Endothelial cell of umbilical vein (primary cell): ENCODE measurements at regions of chr13 and their contacts with region 1.

Region 1: DNA sequence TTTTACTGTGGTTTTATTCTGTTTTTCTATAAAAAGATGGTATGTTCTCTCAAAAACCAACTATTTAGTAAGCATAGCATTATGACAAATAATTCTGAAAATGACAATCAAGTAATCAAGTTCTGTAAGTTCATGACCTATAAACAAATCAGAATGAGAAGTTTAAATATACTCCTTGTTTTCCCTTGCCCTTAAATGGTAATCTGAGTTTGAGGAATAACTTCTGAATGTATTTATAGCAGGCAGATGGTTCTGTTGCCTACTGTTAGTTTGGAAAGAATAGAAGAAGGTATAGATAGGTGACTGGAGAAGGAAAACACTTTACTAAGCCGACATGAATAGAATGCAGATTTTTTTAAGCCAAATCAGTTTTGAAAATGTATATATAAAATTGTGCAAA is 63.9 kb downstream of the POSTN start:
- DNase-seq: no peak
- H3K4me3 ChIP-seq: no peak overlapping the region
- H3K27ac ChIP-seq: no peak overlapping the region
- H3K4me1 ChIP-seq: no peaks in the 10 kb centered on the region
- H3K27me3 ChIP-seq: no peaks in the 10 kb centered on the region
- CTCF ChIP-seq: no peak
- POLR2A ChIP-seq: no peak

Region 2: GRCh38 chr13:37473035-37473434 is 61.6 kb before region 1 on chr13:
- CTCF ChIA-PET with region 1: no interaction called
- POLR2A ChIA-PET with region 1: no interaction called
- dilution Hi-C with region 1: no loop called
- intact Hi-C with region 1: no loop called
- DNase-seq: no peak
- H3K4me3 ChIP-seq: no peak overlapping the region
- H3K27ac ChIP-seq: no peak overlapping the region
- H3K4me1 ChIP-seq: no peaks in the 10 kb centered on the region
- H3K27me3 ChIP-seq: peaks cover 0 to 2% of the 10 kb centered on the region in 2 experiments
- CTCF ChIP-seq: peak in 1 of 2 donors; percentile 6
- POLR2A ChIP-seq: no peak

Region 3: GRCh38 chr13:37560526-37560925 is 25.9 kb after region 1 on chr13:
- CTCF ChIA-PET with region 1: interaction called, 3 read pairs
- POLR2A ChIA-PET with region 1: no interaction called
- dilution Hi-C with region 1: no loop called
- intact Hi-C with region 1: loop called (anchors 1 kb)
- DNase-seq: no peak
- H3K4me3 ChIP-seq: no peak overlapping the region
- H3K27ac ChIP-seq: no peak overlapping the region
- H3K4me1 ChIP-seq: no peaks in the 10 kb centered on the region
- H3K27me3 ChIP-seq: no peaks in the 10 kb centered on the region
- CTCF ChIP-seq: no peak
- POLR2A ChIP-seq: no peak